ENCODE measurements at regions of chr17 and their contacts with region 1.

Region 1: GRCh38 chr17:4625181-4625617 is 16.3 kb downstream of the ALOX15 start:
- DNase-seq: no peak
- ATAC-seq: no peak
- H3K4me3 ChIP-seq: no peak overlapping the region
- H3K4me3 Mint-ChIP-seq: no peak overlapping the region
- H3K27ac ChIP-seq: no peak overlapping the region
- H3K27ac Mint-ChIP-seq: no peak overlapping the region
- H3K4me1 ChIP-seq: peaks cover 3% of the 10 kb centered on the region
- H3K4me1 Mint-ChIP-seq: no peaks in the 10 kb centered on the region
- H3K27me3 ChIP-seq: no peaks in the 10 kb centered on the region
- H3K27me3 Mint-ChIP-seq: peaks cover 16% of the 10 kb centered on the region
- CTCF ChIP-seq: no peak

Region 2: GRCh38 chr17:4199818-4200402 is 425.3 kb before region 1 on chr17:
- CTCF ChIA-PET with region 1: no interaction called
- POLR2A ChIA-PET with region 1: no interaction called
- intact Hi-C with region 1: loop called in 1 of 2 experiments (anchors 10 kb)
- DNase-seq: peak in 6 of 14 experiments; percentile 15 to 74 (median 44)
- ATAC-seq: peak; percentile 86
- H3K4me3 ChIP-seq: no peak overlapping the region
- H3K4me3 Mint-ChIP-seq: no peak overlapping the region
- H3K27ac ChIP-seq: no peak overlapping the region
- H3K27ac Mint-ChIP-seq: no peak overlapping the region
- H3K4me1 ChIP-seq: no peaks in the 10 kb centered on the region
- H3K4me1 Mint-ChIP-seq: peaks cover 4% of the 10 kb centered on the region
- H3K27me3 ChIP-seq: no peaks in the 10 kb centered on the region
- H3K27me3 Mint-ChIP-seq: no peaks in the 10 kb centered on the region
- CTCF ChIP-seq: peak; percentile 81

Region 3: GRCh38 chr17:4565209-4566141 is 59.7 kb before region 1 on chr17:
- CTCF ChIA-PET with region 1: interaction called, 4 read pairs
- POLR2A ChIA-PET with region 1: no interaction called
- intact Hi-C with region 1: loop called (anchors 1 to 2 kb)
- DNase-seq: peak in 12 of 14 experiments; percentile 14 to 81 (median 30)
- ATAC-seq: peak; percentile 89
- H3K4me3 ChIP-seq: no peak overlapping the region
- H3K4me3 Mint-ChIP-seq: peak overlapping the region; percentile 13
- H3K27ac ChIP-seq: no peak overlapping the region
- H3K27ac Mint-ChIP-seq: no peak overlapping the region
- H3K4me1 ChIP-seq: peaks cover 19% of the 10 kb centered on the region
- H3K4me1 Mint-ChIP-seq: peaks cover 31% of the 10 kb centered on the region
- H3K27me3 ChIP-seq: no peaks in the 10 kb centered on the region
- H3K27me3 Mint-ChIP-seq: no peaks in the 10 kb centered on the region
- CTCF ChIP-seq: peak; percentile 92

Region 4: GRCh38 chr17:4891411-4892342 is 266.5 kb after region 1 on chr17:
- CTCF ChIA-PET with region 1: no interaction called
- POLR2A ChIA-PET with region 1: no interaction called
- intact Hi-C with region 1: loop called (anchors 1 to 5 kb)
- DNase-seq: peak in 1 of 14 experiments; percentile 31
- ATAC-seq: no peak
- H3K4me3 ChIP-seq: no peak overlapping the region
- H3K4me3 Mint-ChIP-seq: no peak overlapping the region
- H3K27ac ChIP-seq: no peak overlapping the region
- H3K27ac Mint-ChIP-seq: no peak overlapping the region
- H3K4me1 ChIP-seq: peaks cover 2% of the 10 kb centered on the region
- H3K4me1 Mint-ChIP-seq: peaks cover 5% of the 10 kb centered on the region
- H3K27me3 ChIP-seq: no peaks in the 10 kb centered on the region
- H3K27me3 Mint-ChIP-seq: no peaks in the 10 kb centered on the region
- CTCF ChIP-seq: no peak